Ovary (tissue), 10 donors: ENCODE measurements at regions of chr4 and their contacts with region 1.

Region 1: DNA sequence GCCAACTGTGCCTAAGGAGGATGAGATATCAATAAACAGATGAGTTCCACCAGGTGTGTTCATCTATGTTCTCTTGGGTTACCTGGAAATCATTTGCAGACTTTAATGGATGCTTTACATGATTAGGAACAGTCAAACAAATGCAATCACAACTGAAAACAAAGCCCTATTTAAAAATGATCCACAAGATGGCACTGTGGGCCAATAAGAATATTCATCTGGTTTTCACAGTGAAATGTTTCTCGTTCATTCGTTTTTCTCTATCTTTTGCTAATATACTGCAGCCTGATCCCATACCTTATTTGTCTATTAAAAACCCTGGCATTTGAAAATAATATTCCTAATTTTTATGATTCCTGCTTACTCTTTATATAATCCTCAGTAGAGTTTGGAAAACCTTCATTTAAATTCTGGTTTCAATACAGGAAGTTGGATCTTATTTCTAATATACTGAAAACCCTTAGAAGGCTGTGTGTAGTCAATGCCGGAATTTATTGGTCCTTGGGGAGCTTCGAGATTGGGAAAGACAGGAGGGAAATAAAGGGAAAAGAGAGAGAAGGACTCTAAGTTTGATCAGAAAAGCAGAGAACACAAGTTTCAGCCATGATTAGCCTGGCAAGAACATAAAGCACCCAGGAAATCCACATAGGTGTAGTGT is 63.8 kb upstream of the TAPT1 start:
- DNase-seq: no peak
- H3K4me3 ChIP-seq: no peak overlapping the region
- H3K27ac ChIP-seq: no peak overlapping the region
- H3K4me1 ChIP-seq: no peaks in the 10 kb centered on the region
- H3K27me3 ChIP-seq: no peaks in the 10 kb centered on the region
- CTCF ChIP-seq: peak; percentile 21 to 42 (median 31)
- EP300 ChIP-seq: no peak
- POLR2A ChIP-seq: no peak

Region 2: GRCh38 chr4:17324386-17324830 is 1034.4 kb after region 1 on chr4:
- intact Hi-C with region 1: loop called in 1 of 4 experiments (anchors 10 kb)
- DNase-seq: peak; percentile 13 to 41 (median 35)
- H3K4me3 ChIP-seq: no peak overlapping the region
- H3K27ac ChIP-seq: no peak overlapping the region
- H3K4me1 ChIP-seq: no peaks in the 10 kb centered on the region
- H3K27me3 ChIP-seq: no peaks in the 10 kb centered on the region
- CTCF ChIP-seq: peak in 2 of 3 donors; percentile 25 to 52
- EP300 ChIP-seq: no peak
- POLR2A ChIP-seq: no peak

Region 3: GRCh38 chr4:17336524-17336961 is 1046.5 kb after region 1 on chr4:
- intact Hi-C with region 1: loop called in 1 of 4 experiments (anchors 5 kb)
- DNase-seq: peak in 2 of 5 donors; percentile 26 to 41
- H3K4me3 ChIP-seq: no peak overlapping the region
- H3K27ac ChIP-seq: no peak overlapping the region
- H3K4me1 ChIP-seq: no peaks in the 10 kb centered on the region
- H3K27me3 ChIP-seq: no peaks in the 10 kb centered on the region
- CTCF ChIP-seq: no peak
- EP300 ChIP-seq: no peak
- POLR2A ChIP-seq: no peak

Region 4: DNA sequence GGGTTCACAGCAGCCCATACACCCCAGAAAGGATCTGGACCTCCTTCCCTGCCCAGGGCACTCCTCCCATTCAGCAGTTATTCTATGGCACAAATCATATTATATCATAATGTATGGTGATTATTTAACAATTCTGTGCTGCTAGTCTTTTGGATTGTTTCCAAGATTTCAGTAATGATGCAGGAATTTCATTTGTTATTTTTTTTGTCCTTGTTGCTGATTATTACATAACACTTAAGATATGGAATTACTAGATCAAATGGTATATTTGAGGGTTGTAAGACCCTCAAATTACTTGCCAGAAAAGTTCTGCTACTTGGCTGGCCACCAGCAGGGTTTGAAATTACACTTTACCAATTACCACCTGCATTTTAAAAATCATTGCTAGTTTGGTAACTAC is 1185.5 kb after region 1 on chr4:
- intact Hi-C with region 1: loop called in 2 of 4 experiments (anchors 10 kb)
- DNase-seq: no peak
- H3K4me3 ChIP-seq: no peak overlapping the region
- H3K27ac ChIP-seq: no peak overlapping the region
- H3K4me1 ChIP-seq: no peaks in the 10 kb centered on the region
- H3K27me3 ChIP-seq: no peaks in the 10 kb centered on the region
- CTCF ChIP-seq: no peak
- EP300 ChIP-seq: no peak
- POLR2A ChIP-seq: no peak